ENCODE measurements at regions of chr2 and their contacts with region 1.

Region 1: GRCh38 chr2:178478439-178479274 is at the start of gene FKBP7:
- DNase-seq: peak; percentile 94
- H3K4me3 Mint-ChIP-seq: peak within 1 kb of the TSS; percentile 93
- H3K27ac Mint-ChIP-seq: peak within 1 kb of the TSS; percentile 97
- H3K4me1 Mint-ChIP-seq: peaks cover 35% of the 10 kb centered on the region
- H3K27me3 Mint-ChIP-seq: no peaks in the 10 kb centered on the region
- total RNA-seq, gene FKBP7: 4.8 and 4.9 TPM in 2 replicates

Region 2: DNA sequence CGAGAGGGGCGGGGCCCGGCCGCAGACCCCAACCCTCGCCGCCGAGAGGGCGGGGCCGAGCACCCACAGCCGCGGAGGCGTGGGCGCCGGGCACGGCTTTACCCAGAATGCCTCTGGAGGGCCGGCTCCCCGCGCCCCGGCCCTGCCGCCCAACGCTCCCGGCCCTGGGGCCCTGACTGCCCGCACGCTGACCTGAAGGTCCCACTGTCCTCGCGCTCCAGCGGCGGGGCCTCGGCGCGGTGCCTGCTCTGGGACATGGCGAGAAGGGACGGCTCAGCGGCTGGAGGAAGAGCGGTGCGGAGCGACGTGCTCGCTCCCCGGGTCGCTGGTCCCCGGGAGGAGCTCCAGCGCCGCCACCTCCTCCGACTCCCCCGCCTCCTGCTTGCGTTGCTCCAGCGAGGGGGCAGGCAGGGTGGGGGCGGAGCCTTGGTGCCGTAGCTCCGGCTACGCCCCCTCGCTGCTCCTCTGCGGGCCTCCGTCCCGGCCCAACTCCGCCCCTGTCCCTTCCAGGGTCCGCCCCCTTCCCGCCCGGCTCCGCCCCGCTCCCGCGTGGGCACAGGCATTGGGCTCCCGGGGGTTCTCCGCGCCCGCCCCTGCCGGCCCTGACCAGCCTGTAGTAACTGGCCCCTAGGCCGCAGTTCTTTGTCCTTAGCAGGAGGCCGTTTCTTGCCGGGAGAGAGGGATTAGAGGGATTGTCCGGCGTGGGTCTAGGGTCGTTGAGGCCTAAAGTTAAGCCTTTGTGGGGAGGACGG is 27.7 kb before region 1 on chr2 and contains the starts of genes PJVK and PRKRA:
- intact Hi-C with region 1: loop called (anchors 1 kb)
- DNase-seq: peak; percentile 99
- H3K4me3 Mint-ChIP-seq: peak within 1 kb of the TSS; percentile 94
- H3K27ac Mint-ChIP-seq: peak within 1 kb of the TSS; percentile 98
- H3K4me1 Mint-ChIP-seq: peaks cover 25% of the 10 kb centered on the region
- H3K27me3 Mint-ChIP-seq: peaks cover 7% of the 10 kb centered on the region
- total RNA-seq, gene PJVK: 2.0 and 2.3 TPM in 2 replicates
- total RNA-seq, gene PRKRA: 52.4 and 61.2 TPM in 2 replicates

Region 3: GRCh38 chr2:178491612-178492011 is 13.0 kb after region 1 on chr2:
- intact Hi-C with region 1: no loop called
- DNase-seq: no peak
- H3K4me3 Mint-ChIP-seq: no peak overlapping the region
- H3K27ac Mint-ChIP-seq: no peak overlapping the region
- H3K4me1 Mint-ChIP-seq: peaks cover 18% of the 10 kb centered on the region
- H3K27me3 Mint-ChIP-seq: no peaks in the 10 kb centered on the region

Region 4: DNA sequence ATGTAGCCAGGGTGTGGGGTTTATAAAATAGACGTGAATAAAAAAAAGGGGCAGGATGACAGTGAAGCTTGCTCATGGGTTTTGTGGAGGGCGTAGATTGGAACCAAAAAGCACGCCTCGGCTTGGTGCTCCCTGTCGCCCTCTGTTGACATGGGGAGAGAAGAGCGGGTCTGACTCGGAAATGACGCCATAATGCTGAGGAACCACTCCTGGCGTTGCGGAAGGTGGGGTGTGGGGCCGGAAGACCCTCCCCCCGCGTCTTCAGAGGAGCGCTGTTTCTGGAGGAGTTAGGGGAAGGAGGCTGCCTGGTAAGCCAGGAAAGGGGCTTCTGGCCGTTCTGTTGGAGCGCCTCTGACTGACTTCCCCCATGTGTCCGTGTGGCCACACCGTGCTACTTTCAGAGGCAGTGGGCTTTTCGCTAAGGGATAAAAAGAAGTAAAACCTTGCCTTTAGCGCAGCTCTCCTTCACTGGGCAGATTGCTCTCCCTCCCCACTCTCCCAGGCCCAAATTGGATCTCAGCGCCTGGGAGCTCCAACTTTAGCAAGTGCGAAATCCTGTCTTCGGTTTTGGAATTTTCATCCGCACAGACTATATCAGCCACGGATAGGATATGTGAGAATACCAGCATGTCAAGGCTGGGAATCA is 44.4 kb after region 1 on chr2:
- intact Hi-C with region 1: loop called (anchors 1 kb)
- DNase-seq: peak; percentile 96
- H3K4me3 Mint-ChIP-seq: peak overlapping the region; percentile 95
- H3K27ac Mint-ChIP-seq: peak overlapping the region; percentile 91
- H3K4me1 Mint-ChIP-seq: peaks cover 37% of the 10 kb centered on the region
- H3K27me3 Mint-ChIP-seq: no peaks in the 10 kb centered on the region

Region 5: GRCh38 chr2:178530625-178531142 is 52.0 kb after region 1 on chr2:
- intact Hi-C with region 1: loop called (anchors 2 kb)
- DNase-seq: peak; percentile 79
- H3K4me3 Mint-ChIP-seq: peak overlapping the region; percentile 47
- H3K27ac Mint-ChIP-seq: peak overlapping the region; percentile 39
- H3K4me1 Mint-ChIP-seq: peaks cover 41% of the 10 kb centered on the region
- H3K27me3 Mint-ChIP-seq: no peaks in the 10 kb centered on the region

Region 6: GRCh38 chr2:178700922-178701342 is 222.3 kb after region 1 on chr2:
- intact Hi-C with region 1: loop called (anchors 5 kb)
- DNase-seq: peak; percentile 60
- H3K4me3 Mint-ChIP-seq: no peak overlapping the region
- H3K27ac Mint-ChIP-seq: no peak overlapping the region
- H3K4me1 Mint-ChIP-seq: peaks cover 2% of the 10 kb centered on the region
- H3K27me3 Mint-ChIP-seq: no peaks in the 10 kb centered on the region